GM12878 (cell line): ENCODE measurements at regions of chr2 and their contacts with region 1.

Region 1: GRCh38 chr2:151819920-151820319 is 8.3 kb downstream of the ARL5A start:
- DNase-seq: no peak
- ATAC-seq: peak; percentile 52
- H3K4me3 ChIP-seq: no peak overlapping the region
- H3K27ac ChIP-seq: no peak overlapping the region
- H3K4me1 ChIP-seq: peaks cover 8% of the 10 kb centered on the region
- H3K27me3 ChIP-seq: no peaks in the 10 kb centered on the region
- CTCF ChIP-seq: no peak
- EP300 ChIP-seq: no peak
- POLR2A ChIP-seq: no peak
- RAD21 ChIP-seq: no peak

Region 2: DNA sequence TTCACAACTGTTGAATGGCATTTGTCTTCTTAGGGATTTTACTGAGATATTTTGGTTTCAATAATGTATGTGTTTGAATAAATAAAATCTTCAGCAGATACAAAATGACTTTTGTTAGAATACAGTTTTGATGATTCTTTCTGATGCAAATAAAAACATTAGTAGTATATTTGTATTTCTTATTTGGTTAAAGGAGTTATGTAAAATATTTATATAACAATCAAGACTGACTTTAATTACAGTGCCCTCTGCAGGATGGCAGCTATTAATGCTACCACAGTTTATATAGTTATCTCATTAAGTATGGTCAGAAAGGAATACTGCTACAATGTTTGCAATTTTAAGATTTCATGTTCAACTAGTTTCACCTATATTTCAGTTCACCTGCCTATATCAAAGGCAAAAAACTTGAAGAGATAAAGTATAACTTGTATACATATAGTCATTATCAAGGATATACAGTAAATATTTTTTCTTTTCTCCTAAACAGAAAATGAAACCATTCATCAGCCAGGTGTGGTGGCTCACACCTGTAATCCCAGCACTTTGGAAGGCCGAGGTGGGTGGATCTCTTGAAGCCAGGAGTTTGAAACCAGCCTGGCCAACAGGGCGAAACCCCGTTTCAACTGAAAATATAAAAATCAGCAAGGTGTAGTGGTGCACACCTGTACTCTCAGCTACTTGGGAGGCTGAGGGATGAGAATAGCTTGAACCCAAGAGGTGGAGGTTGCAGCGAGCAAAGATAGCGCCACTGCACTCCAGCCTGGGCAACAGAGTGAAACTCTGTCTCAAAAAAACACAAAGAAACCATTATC is 11.5 kb before region 1 on chr2:
- CTCF ChIA-PET with region 1: interaction called, 12 read pairs
- POLR2A ChIA-PET with region 1: no interaction called
- RAD21 ChIA-PET with region 1: no interaction called
- SMC1A ChIA-PET with region 1: interaction called, 6 read pairs
- in situ Hi-C with region 1: no loop called
- intact Hi-C with region 1: no loop called
- DNase-seq: no peak
- ATAC-seq: peak; percentile 64
- H3K4me3 ChIP-seq: no peak overlapping the region
- H3K27ac ChIP-seq: no peak overlapping the region
- H3K4me1 ChIP-seq: no peaks in the 10 kb centered on the region
- H3K27me3 ChIP-seq: no peaks in the 10 kb centered on the region
- CTCF ChIP-seq: peak in 2 of 3 experiments; percentile 35 to 41; a peak in 3 of 6 replicates
- EP300 ChIP-seq: no peak
- POLR2A ChIP-seq: no peak
- RAD21 ChIP-seq: peak; percentile 38; the same call in 1 of the 2 replicates

Region 3: DNA sequence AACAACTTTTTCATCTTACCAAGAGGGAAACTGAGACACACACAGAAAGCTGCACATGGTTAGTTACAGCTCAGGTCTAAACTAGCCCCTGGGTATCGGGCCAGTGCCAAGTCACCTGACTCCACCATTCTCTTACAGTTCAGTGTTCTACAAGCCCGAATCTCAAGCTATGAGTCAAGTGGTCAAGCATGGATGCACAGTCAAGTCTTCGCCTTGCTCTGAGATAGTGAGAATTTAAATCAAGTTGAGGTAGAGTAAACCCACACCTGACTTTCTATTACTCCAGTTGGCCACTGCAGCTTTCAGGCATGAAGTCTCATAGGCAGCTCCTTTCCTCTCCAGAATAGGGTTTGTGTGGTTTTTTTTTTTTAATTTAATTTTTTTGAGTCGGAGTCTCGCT is 42.8 kb after region 1 on chr2:
- CTCF ChIA-PET with region 1: interaction called, 3 read pairs
- POLR2A ChIA-PET with region 1: no interaction called
- RAD21 ChIA-PET with region 1: no interaction called
- SMC1A ChIA-PET with region 1: interaction called, 15 read pairs
- in situ Hi-C with region 1: no loop called
- intact Hi-C with region 1: no loop called
- DNase-seq: peak; percentile 96
- ATAC-seq: peak; percentile 100
- H3K4me3 ChIP-seq: no peak overlapping the region
- H3K27ac ChIP-seq: no peak overlapping the region
- H3K4me1 ChIP-seq: peaks cover 21% of the 10 kb centered on the region
- H3K27me3 ChIP-seq: no peaks in the 10 kb centered on the region; a peak in 1 of 4 replicates
- CTCF ChIP-seq: no peak
- EP300 ChIP-seq: peak in 1 of 2 experiments; percentile 16; a peak in 1 of 4 replicates
- POLR2A ChIP-seq: no peak
- RAD21 ChIP-seq: peak; percentile 16; the same call in 1 of the 2 replicates

Region 4: GRCh38 chr2:151947823-151948165 is 127.9 kb after region 1 on chr2:
- CTCF ChIA-PET with region 1: no interaction called
- POLR2A ChIA-PET with region 1: no interaction called
- RAD21 ChIA-PET with region 1: no interaction called
- SMC1A ChIA-PET with region 1: no interaction called
- in situ Hi-C with region 1: no loop called
- intact Hi-C with region 1: no loop called
- DNase-seq: no peak
- ATAC-seq: no peak
- H3K4me3 ChIP-seq: no peak overlapping the region
- H3K27ac ChIP-seq: no peak overlapping the region
- H3K4me1 ChIP-seq: no peaks in the 10 kb centered on the region
- H3K27me3 ChIP-seq: no peaks in the 10 kb centered on the region
- CTCF ChIP-seq: no peak
- EP300 ChIP-seq: no peak
- POLR2A ChIP-seq: no peak
- RAD21 ChIP-seq: no peak